Activated CD4-positive, alpha-beta T cell treated with anti-CD3 and anti-CD28 coated beads, Interleukin-2, amount 10 ng/mL, durations not matched to agents 24 days and 14 days (primary cell): ENCODE measurements at regions of chr1 and their contacts with region 1.

Region 1: DNA sequence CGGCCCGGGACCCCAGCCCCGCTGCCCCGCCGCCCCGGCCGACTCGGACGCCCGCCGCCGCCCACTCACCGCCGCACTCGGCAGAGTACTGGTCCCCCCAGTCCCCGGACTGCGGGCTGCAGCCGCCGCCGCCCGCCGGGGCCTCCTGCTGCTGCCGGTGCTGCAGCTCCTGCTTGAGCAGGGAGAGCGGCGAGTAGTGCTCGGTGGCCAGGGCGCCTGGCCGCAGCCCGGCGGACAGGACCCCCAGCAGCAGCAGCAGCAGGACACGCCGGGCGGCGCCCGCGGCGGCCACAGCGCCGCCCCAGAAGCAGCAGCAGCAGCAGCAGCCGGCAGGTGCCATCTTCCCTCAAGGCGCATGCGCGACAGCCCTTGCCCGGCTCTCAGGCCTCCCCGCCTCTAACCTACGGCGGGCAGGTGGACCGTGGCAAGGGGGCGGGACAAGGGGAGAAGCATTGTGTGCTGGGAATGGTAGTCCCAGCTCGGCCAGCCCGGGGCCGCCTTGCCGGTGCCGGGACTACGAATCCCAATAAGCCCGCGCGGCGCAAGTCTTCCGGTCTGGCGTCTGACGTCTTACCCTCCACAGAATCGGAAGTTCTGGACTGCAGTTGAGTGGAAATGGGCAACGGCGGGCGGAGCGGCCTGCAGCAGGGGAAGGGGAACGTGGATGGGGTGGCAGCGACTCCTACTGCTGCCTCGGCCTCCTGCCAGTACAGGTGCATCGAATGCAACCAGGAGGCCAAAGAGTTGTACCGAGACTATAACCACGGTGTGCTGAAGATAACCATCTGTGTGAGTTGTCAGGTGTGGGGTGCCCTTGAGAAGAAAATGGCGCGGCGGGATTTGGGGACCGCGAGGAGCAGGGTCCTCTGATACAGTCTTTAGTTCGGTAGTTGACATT is at the starts of genes ARV1 and TTC13:
- DNase-seq: peak; percentile 99
- H3K4me3 Mint-ChIP-seq: peak within 1 kb of the TSS; percentile 89
- H3K27ac Mint-ChIP-seq: peak within 1 kb of the TSS; percentile 92
- H3K4me1 Mint-ChIP-seq: peaks cover 31% of the 10 kb centered on the region
- H3K27me3 Mint-ChIP-seq: no peaks in the 10 kb centered on the region
- total RNA-seq, gene ARV1: 15.0 and 15.2 TPM in 2 replicates
- total RNA-seq, gene TTC13: 22.7 and 23.8 TPM in 2 replicates

Region 2: GRCh38 chr1:229625915-229626831 is 1352.6 kb before region 1 on chr1 and contains the starts of genes TAF5L and URB2:
- intact Hi-C with region 1: loop called (anchors 5 kb)
- DNase-seq: peak; percentile 97
- H3K4me3 Mint-ChIP-seq: peak within 1 kb of the TSS; percentile 99
- H3K27ac Mint-ChIP-seq: peak within 1 kb of the TSS; percentile 96
- H3K4me1 Mint-ChIP-seq: peaks cover 49% of the 10 kb centered on the region
- H3K27me3 Mint-ChIP-seq: no peaks in the 10 kb centered on the region
- total RNA-seq, gene TAF5L: 29.7 and 30.7 TPM in 2 replicates
- total RNA-seq, gene URB2: 35.8 and 37.1 TPM in 2 replicates

Region 3: GRCh38 chr1:230867903-230868735 is 110.6 kb before region 1 on chr1 and contains the start of gene C1orf198:
- intact Hi-C with region 1: loop called (anchors 1 kb)
- DNase-seq: peak; percentile 91
- H3K4me3 Mint-ChIP-seq: peak within 1 kb of the TSS; percentile 89
- H3K27ac Mint-ChIP-seq: peak within 1 kb of the TSS; percentile 84
- H3K4me1 Mint-ChIP-seq: peaks cover 31% of the 10 kb centered on the region
- H3K27me3 Mint-ChIP-seq: peaks cover 35% of the 10 kb centered on the region
- total RNA-seq, gene C1orf198: 12.4 and 13.7 TPM in 2 replicates

Region 4: DNA sequence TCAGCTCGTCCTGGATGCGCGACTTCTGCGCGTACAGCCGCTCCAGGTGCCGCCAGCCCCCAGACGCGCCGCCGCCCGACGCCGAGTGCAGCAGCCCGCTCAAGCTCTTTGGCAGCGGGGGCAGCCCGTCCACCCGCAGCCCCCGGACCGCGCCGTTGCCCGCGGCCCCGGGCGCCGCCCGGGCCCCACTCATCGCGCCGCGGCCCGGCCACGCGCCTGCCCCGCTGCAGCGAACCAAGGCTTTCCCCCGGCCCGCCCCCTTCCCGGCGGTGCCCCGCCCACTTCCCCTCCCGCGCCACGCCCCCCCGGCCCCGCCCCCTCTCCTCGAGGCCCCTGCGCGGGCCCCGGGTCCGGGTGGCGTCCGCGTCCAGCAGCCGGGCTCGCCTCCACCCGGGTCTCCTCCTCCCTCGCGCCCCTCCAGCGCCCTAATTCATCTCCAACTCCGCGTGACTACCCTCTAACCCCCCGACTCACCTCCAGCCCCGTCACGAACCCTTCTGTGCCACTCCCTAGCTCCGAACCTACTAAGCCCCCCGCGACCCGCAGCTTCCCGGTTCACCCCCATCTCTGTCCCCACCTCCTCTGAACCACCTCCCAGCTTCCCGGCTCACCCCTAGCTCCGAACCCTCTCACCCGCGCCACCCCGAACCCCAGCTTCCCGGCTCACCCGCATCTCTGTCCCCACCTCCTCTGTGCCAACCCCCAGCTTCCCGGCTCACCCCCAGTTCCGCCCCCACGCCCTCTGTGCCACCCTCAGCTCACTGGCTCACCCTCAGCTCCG is 61.5 kb after region 1 on chr1 and contains the start of gene FAM89A:
- intact Hi-C with region 1: loop called (anchors 1 kb)
- DNase-seq: peak; percentile 90
- H3K4me3 Mint-ChIP-seq: peak within 1 kb of the TSS; percentile 85
- H3K27ac Mint-ChIP-seq: peak within 1 kb of the TSS; percentile 61
- H3K4me1 Mint-ChIP-seq: peaks cover 28% of the 10 kb centered on the region
- H3K27me3 Mint-ChIP-seq: peaks cover 30% of the 10 kb centered on the region
- total RNA-seq, gene FAM89A: 20.2 and 20.3 TPM in 2 replicates

Region 5: DNA sequence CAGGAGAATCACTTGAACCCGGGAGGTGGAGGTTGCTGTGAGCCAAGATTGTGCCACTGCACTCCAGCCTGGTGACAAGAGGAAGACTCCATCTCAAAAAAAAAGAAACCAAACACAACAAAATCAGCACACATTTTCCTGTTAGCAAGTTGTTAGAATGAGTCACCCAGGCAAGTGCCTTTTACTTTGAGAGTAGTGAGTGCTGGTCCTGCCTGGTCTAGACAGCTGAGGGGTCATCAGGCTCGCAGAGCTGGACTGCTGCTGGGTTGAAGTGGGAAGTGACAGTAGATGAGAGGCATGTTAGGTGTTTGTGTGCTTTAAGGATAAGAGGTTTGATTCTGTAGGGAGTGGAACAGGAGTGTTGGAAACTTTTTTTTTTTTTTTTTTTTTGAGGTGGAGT is 294.1 kb after region 1 on chr1:
- intact Hi-C with region 1: loop called (anchors 2 kb)
- DNase-seq: peak; percentile 78
- H3K4me3 Mint-ChIP-seq: peak overlapping the region; percentile 75
- H3K27ac Mint-ChIP-seq: peak overlapping the region; percentile 99
- H3K4me1 Mint-ChIP-seq: peaks cover 33% of the 10 kb centered on the region
- H3K27me3 Mint-ChIP-seq: no peaks in the 10 kb centered on the region

Region 6: GRCh38 chr1:231528172-231529029 is 549.7 kb after region 1 on chr1 and contains the start of gene TSNAX:
- intact Hi-C with region 1: loop called (anchors 2 kb)
- DNase-seq: peak; percentile 97
- H3K4me3 Mint-ChIP-seq: peak within 1 kb of the TSS; percentile 92
- H3K27ac Mint-ChIP-seq: peak within 1 kb of the TSS; percentile 97
- H3K4me1 Mint-ChIP-seq: peaks cover 32% of the 10 kb centered on the region
- H3K27me3 Mint-ChIP-seq: no peaks in the 10 kb centered on the region
- total RNA-seq, gene TSNAX: 41.4 and 42.7 TPM in 2 replicates

Region 7: DNA sequence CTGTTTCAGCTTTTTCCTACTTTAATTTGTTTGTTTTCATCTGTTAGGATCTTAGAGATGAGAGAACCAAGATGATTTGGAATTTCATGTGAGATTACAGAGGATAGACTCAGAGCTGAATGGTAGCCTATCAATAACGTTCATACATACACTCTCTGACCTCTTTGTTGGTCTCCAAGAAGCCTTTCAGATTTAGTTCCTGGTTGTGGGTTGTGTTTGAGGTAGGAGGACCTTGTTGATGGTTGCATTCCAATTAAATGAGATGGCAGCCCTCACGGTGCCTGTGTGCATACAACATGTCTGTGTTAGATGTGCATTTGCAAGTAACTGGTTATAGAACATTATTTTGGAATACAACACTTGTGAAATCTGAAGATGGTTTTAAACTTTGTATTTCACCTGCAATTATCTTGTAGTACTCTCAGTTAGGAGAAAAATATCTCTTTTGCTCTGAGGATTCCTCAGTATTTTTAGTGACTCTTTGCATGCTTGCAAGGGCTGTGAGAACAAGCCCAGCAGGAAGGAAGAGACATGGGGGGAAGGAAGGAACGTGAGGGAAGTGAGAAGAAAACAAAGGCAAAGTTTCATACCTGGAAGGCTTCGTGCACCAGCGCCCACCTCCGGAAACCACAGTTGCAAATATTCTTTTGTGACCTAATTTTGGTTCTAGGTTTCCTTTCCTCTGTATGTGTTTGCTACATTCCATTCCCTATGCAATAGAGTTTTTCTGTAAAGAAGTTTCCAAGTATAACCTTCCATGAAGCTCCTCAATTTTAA is 939.7 kb after region 1 on chr1:
- intact Hi-C with region 1: no loop called
- DNase-seq: peak; percentile 77
- H3K4me3 Mint-ChIP-seq: peak overlapping the region; percentile 75
- H3K27ac Mint-ChIP-seq: peak overlapping the region; percentile 37
- H3K4me1 Mint-ChIP-seq: peaks cover 38% of the 10 kb centered on the region
- H3K27me3 Mint-ChIP-seq: peaks cover 34% of the 10 kb centered on the region